Activated B cell treated with CpG ODN at 0.5 μM for 24 hours (primary cell): ENCODE measurements at regions of chr1 and their contacts with region 1.

Region 1: GRCh38 chr1:214213136-214213535 is 67.8 kb upstream of the SMYD2 start:
- DNase-seq: no peak
- ATAC-seq: no peak
- H3K4me3 Mint-ChIP-seq: no peak overlapping the region
- H3K27ac Mint-ChIP-seq: no peak overlapping the region
- H3K4me1 Mint-ChIP-seq: peaks cover 3% of the 10 kb centered on the region
- H3K27me3 Mint-ChIP-seq: peaks cover 4% of the 10 kb centered on the region
- CTCF ChIP-seq: no peak

Region 2: GRCh38 chr1:214637722-214638458 is 424.8 kb after region 1 on chr1:
- CTCF ChIA-PET with region 1: interaction called, 5 read pairs
- POLR2A ChIA-PET with region 1: no interaction called
- intact Hi-C with region 1: loop called (anchors 1 kb)
- DNase-seq: no peak
- ATAC-seq: no peak
- H3K4me3 Mint-ChIP-seq: no peak overlapping the region
- H3K27ac Mint-ChIP-seq: no peak overlapping the region
- H3K4me1 Mint-ChIP-seq: no peaks in the 10 kb centered on the region
- H3K27me3 Mint-ChIP-seq: no peaks in the 10 kb centered on the region
- CTCF ChIP-seq: no peak

Region 3: GRCh38 chr1:215526553-215527151 is 1313.5 kb after region 1 on chr1:
- CTCF ChIA-PET with region 1: interaction called, 4 read pairs
- POLR2A ChIA-PET with region 1: no interaction called
- intact Hi-C with region 1: loop called (anchors 2 kb)
- DNase-seq: no peak
- ATAC-seq: no peak
- H3K4me3 Mint-ChIP-seq: no peak overlapping the region
- H3K27ac Mint-ChIP-seq: no peak overlapping the region
- H3K4me1 Mint-ChIP-seq: no peaks in the 10 kb centered on the region
- H3K27me3 Mint-ChIP-seq: peaks cover 1% of the 10 kb centered on the region
- CTCF ChIP-seq: peak; percentile 49